H1 (cell line): ENCODE measurements at regions of chr10 and their contacts with region 1.

Region 1: GRCh38 chr10:97869091-97870042 is 19.7 kb downstream of the GOLGA7B start:
- DNase-seq: peak in 1 of 2 experiments; percentile 71
- H3K4me3 ChIP-seq: no peak overlapping the region
- H3K27ac ChIP-seq: no peak overlapping the region; the same call in 1 of the 2 replicates
- H3K4me1 ChIP-seq: peaks cover 4 to 22% (median 9%) of the 10 kb centered on the region in 4 experiments
- H3K27me3 ChIP-seq: no peaks in the 10 kb centered on the region
- CTCF ChIP-seq: peak; percentile 61 to 94 (median 79)
- EP300 ChIP-seq: no peak
- POLR2A ChIP-seq: no peak
- RAD21 ChIP-seq: peak; percentile 84 to 88

Region 2: DNA sequence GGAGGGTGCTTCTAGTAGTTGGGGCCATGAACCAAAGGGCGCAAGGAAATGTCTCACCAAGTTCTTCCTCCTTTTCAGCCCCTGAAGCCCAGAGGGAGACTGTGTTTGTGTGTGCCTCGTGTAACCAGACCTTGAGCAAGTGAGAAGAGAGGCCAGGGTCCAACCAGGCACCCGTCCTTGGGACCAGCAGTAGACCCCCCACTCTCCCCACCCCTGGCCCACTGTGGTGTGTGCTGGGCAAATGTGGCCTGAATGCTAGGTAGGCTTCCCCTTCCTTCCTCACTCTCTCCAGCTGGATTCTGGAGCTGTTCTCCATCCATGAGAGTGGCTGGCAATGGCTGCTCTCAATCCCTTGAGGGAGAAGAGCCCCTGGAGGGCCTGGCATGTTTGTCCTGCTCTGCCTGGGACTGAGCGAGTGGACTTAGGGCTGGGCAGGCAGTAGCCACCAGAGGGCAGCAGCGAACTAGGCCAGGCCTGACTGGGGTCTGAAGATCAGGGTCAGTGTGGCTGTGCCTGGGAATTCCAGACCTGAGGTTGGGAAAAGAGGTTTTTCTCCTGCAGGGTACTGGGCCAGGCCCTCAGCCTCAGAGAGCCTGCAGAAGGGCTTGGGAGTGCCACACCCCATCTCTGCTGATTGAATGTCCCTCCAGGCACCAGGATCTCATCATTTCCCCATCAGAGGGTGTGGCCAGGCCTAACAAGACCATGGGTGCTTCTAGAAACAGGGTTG is 110.0 kb before region 1 on chr10:
- CTCF ChIA-PET with region 1: interaction called, 77 read pairs
- POLR2A ChIA-PET with region 1: interaction called, 3 read pairs
- DNase-seq: peak; percentile 76 to 95
- H3K4me3 ChIP-seq: no peak overlapping the region
- H3K27ac ChIP-seq: no peak overlapping the region
- H3K4me1 ChIP-seq: peaks cover 0 to 14% (median 6%) of the 10 kb centered on the region in 4 experiments; a peak in 6 of 7 replicates
- H3K27me3 ChIP-seq: no peaks in the 10 kb centered on the region
- CTCF ChIP-seq: peak; percentile 96 to 99 (median 99)
- EP300 ChIP-seq: no peak
- POLR2A ChIP-seq: no peak
- RAD21 ChIP-seq: peak; percentile 95 to 97

Region 3: GRCh38 chr10:97780841-97781617 is 88.3 kb before region 1 on chr10:
- CTCF ChIA-PET with region 1: interaction called, 24 read pairs
- POLR2A ChIA-PET with region 1: no interaction called
- DNase-seq: no peak
- H3K4me3 ChIP-seq: no peak overlapping the region
- H3K27ac ChIP-seq: no peak overlapping the region
- H3K4me1 ChIP-seq: peaks cover 0 to 14% (median 5%) of the 10 kb centered on the region in 4 experiments; a peak in 6 of 7 replicates
- H3K27me3 ChIP-seq: no peaks in the 10 kb centered on the region
- CTCF ChIP-seq: no peak
- EP300 ChIP-seq: no peak
- POLR2A ChIP-seq: no peak
- RAD21 ChIP-seq: peak in 1 of 2 experiments; percentile 1; a peak in 1 of 4 replicates

Region 4: DNA sequence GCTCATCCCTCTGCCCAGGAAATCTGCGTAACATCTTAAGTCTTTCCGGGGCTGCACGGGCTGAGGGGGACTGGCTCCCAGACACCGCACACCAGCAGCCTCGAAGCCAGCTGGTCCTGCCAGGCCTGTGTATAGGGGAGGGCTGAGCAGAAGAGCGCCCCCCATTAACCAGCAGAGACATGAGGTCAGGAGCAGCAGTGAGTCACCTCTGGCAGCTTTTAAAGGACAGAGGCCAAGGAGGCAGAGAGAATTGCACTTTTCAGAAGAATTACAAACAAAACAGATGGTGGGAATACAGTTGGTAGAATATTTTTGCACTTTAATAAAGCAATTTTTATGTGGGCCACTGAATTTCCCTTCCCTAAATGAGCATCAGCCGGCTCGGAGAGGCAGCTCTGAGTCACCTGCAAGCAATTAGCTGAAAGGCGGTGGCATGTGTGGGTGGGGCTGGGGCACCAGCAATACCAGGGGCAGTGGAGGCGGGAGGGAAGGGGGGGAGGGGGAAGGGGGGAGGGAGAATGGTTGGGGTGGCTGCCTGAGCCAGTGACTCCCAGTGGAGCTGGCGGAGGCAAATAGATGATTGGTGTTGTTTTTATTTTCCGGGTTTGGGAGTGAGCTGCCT is 19.4 kb after region 1 on chr10:
- CTCF ChIA-PET with region 1: interaction called, 47 read pairs
- POLR2A ChIA-PET with region 1: interaction called, 7 read pairs
- DNase-seq: peak in 1 of 2 experiments; percentile 36
- H3K4me3 ChIP-seq: peak overlapping the region in 1 of 4 experiments; percentile 40; a peak in 1 of 8 replicates
- H3K27ac ChIP-seq: no peak overlapping the region
- H3K4me1 ChIP-seq: peaks cover 0 to 18% (median 13%) of the 10 kb centered on the region in 4 experiments; a peak in 6 of 7 replicates
- H3K27me3 ChIP-seq: no peaks in the 10 kb centered on the region; a peak in 1 of 7 replicates
- CTCF ChIP-seq: peak in 1 of 3 experiments; percentile 3; a peak in 1 of 4 replicates
- EP300 ChIP-seq: no peak
- POLR2A ChIP-seq: no peak
- RAD21 ChIP-seq: no peak